ENCODE measurements at regions of chr2 and their contacts with region 1.

Region 1: GRCh38 chr2:68889500-68890185 is 18.4 kb upstream of the BMP10 start:
- DNase-seq: peak; percentile 64
- ATAC-seq: peak; percentile 49
- H3K4me3 ChIP-seq: no peak overlapping the region
- H3K27ac ChIP-seq: no peak overlapping the region
- H3K4me1 ChIP-seq: no peaks in the 10 kb centered on the region
- H3K27me3 ChIP-seq: peaks cover 1% of the 10 kb centered on the region; the same call in 1 of the 2 replicates
- CTCF ChIP-seq: no peak
- POLR2A ChIP-seq: no peak
- RAD21 ChIP-seq: no peak

Region 2: GRCh38 chr2:68734688-68735525 is 154.7 kb before region 1 on chr2 and contains the start of gene ARHGAP25:
- CTCF ChIA-PET with region 1: no interaction called
- POLR2A ChIA-PET with region 1: no interaction called
- dilution Hi-C with region 1: no loop called
- in situ Hi-C with region 1: no loop called
- intact Hi-C with region 1: no loop called
- DNase-seq: no peak
- ATAC-seq: no peak
- H3K4me3 ChIP-seq: no peak within 1 kb of the TSS
- H3K27ac ChIP-seq: no peak within 1 kb of the TSS
- H3K4me1 ChIP-seq: peaks cover 10% of the 10 kb centered on the region
- H3K27me3 ChIP-seq: no peaks in the 10 kb centered on the region
- CTCF ChIP-seq: no peak
- POLR2A ChIP-seq: no peak
- RAD21 ChIP-seq: no peak
- total RNA-seq, gene ARHGAP25: 0.28 and 0.36 TPM in 2 replicates

Region 3: GRCh38 chr2:68849579-68850030 is 40.0 kb before region 1 on chr2:
- CTCF ChIA-PET with region 1: no interaction called
- POLR2A ChIA-PET with region 1: no interaction called
- dilution Hi-C with region 1: no loop called
- in situ Hi-C with region 1: no loop called
- intact Hi-C with region 1: loop called (anchors 5 kb)
- DNase-seq: peak; percentile 89
- ATAC-seq: peak; percentile 86
- H3K4me3 ChIP-seq: no peak overlapping the region
- H3K27ac ChIP-seq: no peak overlapping the region
- H3K4me1 ChIP-seq: peaks cover 4% of the 10 kb centered on the region
- H3K27me3 ChIP-seq: peaks cover 3% of the 10 kb centered on the region; the same call in 1 of the 2 replicates
- CTCF ChIP-seq: no peak
- POLR2A ChIP-seq: no peak
- RAD21 ChIP-seq: no peak